PC-3 (cell line): ENCODE measurements at regions of chr1 and their contacts with region 1.

Region 1: DNA sequence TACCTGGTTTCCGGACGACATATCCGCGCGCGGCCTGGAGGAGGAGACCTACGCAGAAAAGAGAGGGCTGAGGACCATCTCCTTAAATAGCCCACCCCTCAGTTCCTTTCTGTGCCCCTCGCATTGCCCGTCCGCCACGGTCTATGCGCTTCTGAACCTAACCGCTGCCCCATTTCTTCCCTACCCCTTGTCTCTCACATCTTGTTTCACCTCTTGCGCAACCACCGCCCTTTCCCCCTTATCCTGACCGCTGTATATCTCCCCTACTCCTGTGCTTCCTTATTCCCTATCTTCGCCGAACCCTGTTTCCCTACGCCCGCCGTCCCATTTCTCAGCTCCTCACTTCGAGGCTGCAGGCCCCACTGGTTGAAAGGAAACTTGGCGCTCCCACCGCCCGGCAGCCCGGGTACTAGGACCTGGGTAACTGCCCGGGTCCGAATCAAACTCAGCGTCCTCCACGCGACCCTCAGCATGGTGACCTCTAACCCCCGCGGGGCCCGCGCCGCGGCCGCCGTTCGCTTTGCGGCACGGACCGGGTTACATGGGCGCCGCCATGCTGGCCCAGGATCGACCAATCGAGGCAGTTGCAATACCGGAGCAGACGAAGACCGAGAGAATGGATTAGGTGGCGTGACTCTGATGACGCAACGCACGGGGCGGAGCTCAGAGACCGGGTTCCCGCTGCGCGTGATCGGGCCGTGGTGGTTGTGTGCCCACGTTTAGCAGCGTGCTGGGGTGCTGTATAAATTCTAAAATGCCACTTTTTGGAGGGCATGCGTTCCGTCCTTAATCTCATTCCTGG is at the start of gene MRPS15:
- DNase-seq: peak; percentile 94
- ATAC-seq: peak; percentile 92
- H3K4me3 ChIP-seq: peak within 1 kb of the TSS; percentile 99
- H3K27ac ChIP-seq: peak within 1 kb of the TSS; percentile 75
- H3K4me1 ChIP-seq: peaks cover 12% of the 10 kb centered on the region
- H3K27me3 ChIP-seq: no peaks in the 10 kb centered on the region
- CTCF ChIP-seq: no peak
- total RNA-seq, gene MRPS15: 164 and 213 TPM in 2 replicates

Region 2: DNA sequence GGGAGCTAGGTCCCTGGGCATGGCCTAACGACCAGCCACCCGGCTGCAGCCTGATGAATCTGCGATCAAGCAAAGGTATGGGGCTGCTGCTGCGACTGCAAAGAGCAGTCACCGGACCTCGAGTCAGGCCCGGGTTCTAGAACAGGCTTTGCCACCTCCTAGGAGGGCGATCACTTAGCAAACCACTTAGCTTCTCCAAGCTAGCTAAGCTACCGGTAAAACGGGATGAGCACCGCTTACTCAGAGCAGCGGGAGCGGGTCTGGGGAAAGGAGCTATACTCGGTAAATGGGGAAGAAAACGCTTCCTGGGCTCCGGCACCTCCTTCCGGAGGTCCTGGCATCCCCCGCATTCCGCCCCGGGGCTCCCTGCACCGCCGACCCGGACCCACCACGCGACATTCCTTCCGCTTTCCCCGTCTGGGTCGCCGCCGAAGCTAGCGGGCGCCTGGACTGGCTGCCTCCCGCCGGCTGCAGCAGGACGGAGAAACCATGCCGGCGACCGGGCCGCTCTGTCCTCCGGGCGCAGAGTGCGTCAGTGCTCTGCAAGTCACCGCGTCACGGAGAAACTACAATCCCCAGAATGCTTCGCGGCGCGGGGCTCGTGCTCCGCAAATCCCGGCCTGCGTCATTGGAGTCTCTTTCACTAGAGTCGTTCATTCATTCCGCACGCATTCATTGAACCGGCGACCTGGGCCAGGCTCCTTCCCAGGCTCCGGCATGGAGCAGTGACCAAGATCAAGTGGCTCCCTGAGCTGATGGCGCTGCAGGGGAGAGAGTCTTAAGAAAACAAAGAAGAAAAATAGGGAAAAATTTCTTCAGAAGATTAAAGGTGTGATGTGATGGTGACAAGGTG is 66.4 kb before region 1 on chr1 and contains the start of gene LSM10:
- CTCF ChIA-PET with region 1: no interaction called
- POLR2A ChIA-PET with region 1: no interaction called
- intact Hi-C with region 1: loop called (anchors 1 kb)
- DNase-seq: peak; percentile 96
- ATAC-seq: peak; percentile 95
- H3K4me3 ChIP-seq: peak within 1 kb of the TSS; percentile 93
- H3K27ac ChIP-seq: peak within 1 kb of the TSS; percentile 56
- H3K4me1 ChIP-seq: peaks cover 14% of the 10 kb centered on the region; the same call in 1 of the 2 replicates
- H3K27me3 ChIP-seq: no peaks in the 10 kb centered on the region
- CTCF ChIP-seq: no peak
- total RNA-seq, gene LSM10: 19.2 and 35.2 TPM in 2 replicates